ENCODE measurements at regions of chr18 and their contacts with region 1.

Region 1: GRCh38 chr18:32470713-32471633 is at the start of gene GAREM1:
- DNase-seq: peak; percentile 98
- H3K4me3 ChIP-seq: peak within 1 kb of the TSS; percentile 34 to 55 (median 45)
- H3K27ac ChIP-seq: peak within 1 kb of the TSS; percentile 9
- H3K4me1 ChIP-seq: peaks cover 13% of the 10 kb centered on the region
- H3K27me3 ChIP-seq: peaks cover 18 to 22% of the 10 kb centered on the region in 2 experiments
- CTCF ChIP-seq: peak; percentile 61 to 69
- POLR2A ChIP-seq: no peak
- total RNA-seq, gene GAREM1: 1.0 and 1.1 TPM in 2 replicates

Region 2: DNA sequence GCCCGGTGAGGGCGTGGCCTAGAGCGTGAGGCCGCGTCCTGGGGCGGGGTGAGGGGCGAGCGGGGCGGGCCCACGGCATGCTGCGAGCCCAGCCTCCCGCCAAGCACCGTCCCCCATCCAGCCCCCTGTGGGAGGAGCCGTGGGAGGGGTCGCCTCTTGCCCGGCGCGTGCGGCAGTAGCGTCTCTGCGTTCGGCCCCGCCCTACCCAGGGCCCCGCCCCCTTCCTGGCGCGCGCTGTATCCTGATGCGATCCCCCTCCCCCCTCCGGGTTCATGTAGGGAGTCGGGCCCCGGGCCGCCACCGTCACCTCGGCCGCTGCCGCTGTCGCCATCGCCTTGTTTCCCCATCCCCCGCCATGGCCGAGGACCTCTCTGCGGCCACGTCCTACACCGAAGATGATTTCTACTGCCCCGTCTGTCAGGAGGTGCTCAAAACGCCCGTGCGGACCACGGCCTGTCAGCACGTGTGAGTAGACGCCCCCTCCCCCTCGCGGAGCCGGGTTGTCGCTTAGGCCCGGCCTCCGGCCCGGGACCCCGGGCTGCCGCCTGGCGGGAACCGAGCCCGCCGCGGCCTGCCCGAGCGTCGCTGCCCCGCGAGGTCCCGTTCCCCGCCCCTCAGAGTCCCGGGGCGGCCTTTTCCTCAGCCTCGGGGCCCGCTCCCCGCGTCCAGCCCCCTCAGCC is 378.4 kb before region 1 on chr18:
- CTCF ChIA-PET with region 1: interaction called, 3 read pairs
- POLR2A ChIA-PET with region 1: no interaction called
- dilution Hi-C with region 1: no loop called
- intact Hi-C with region 1: loop called (anchors 2 kb)
- DNase-seq: peak; percentile 98
- H3K4me3 ChIP-seq: peak overlapping the region; percentile 30 to 88 (median 81)
- H3K27ac ChIP-seq: peak overlapping the region; percentile 95
- H3K4me1 ChIP-seq: peaks cover 12% of the 10 kb centered on the region
- H3K27me3 ChIP-seq: no peaks in the 10 kb centered on the region
- CTCF ChIP-seq: no peak
- POLR2A ChIP-seq: peak; percentile 73

Region 3: DNA sequence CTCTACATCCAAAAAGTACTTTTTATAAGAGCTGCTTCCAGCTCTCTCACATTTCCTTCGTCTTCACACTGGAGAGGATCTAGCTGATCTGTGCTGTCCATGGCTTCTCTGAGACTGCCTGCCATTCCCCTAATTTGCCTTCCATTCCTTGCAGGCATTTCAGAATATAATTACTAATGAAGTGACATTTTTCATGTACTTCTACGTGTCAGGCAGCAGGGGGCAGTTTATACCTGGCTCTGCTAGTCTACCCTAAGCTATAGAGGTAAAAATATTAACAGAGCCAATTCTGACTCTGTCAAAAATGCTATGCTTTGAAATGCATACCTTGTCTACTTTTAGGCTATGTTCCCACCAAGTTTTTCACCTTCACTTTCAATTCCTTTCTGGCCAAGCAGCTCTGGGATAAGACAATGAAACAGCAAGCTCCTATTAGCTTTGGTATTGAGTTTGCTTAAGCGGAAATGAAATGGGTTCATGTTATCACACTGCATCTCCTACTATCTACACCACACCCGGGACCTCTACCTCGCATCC is 199.2 kb before region 1 on chr18:
- CTCF ChIA-PET with region 1: interaction called, 142 read pairs
- POLR2A ChIA-PET with region 1: no interaction called
- dilution Hi-C with region 1: no loop called
- intact Hi-C with region 1: loop called (anchors 1 kb)
- DNase-seq: peak; percentile 38
- H3K4me3 ChIP-seq: no peak overlapping the region
- H3K27ac ChIP-seq: no peak overlapping the region
- H3K4me1 ChIP-seq: no peaks in the 10 kb centered on the region
- H3K27me3 ChIP-seq: peaks cover 0 to 1% of the 10 kb centered on the region in 2 experiments
- CTCF ChIP-seq: peak; percentile 43 to 62
- POLR2A ChIP-seq: no peak

Region 4: DNA sequence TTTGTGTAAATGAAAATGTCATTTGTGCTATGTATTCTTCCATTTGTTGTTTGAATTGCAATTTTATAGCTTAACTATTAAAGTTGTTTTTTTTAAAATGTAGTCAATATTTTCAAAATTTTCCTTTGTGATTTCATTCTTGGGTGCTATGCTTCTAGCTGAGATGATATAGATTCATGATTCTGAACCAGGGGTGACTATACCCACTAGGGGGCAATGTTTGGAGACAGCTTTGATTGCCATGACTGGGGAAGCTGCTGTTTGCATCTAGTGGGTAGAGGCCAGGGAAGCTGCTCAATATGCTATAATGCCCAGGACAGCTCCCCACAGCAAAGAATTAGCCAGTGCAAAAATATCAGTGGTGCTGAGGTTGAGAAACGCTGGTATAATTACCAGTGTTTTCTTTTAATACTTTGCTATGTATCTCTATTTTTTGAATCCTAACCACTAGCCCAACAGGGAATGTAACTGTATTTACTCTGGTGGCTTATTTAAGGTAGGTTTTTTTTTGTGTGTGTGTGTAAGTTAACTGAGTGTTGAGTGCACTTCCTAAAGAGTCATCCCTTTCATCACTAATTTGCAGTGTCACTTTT is 181.4 kb before region 1 on chr18:
- CTCF ChIA-PET with region 1: interaction called, 295 read pairs
- POLR2A ChIA-PET with region 1: interaction called, 3 read pairs
- dilution Hi-C with region 1: no loop called
- intact Hi-C with region 1: loop called (anchors 1 kb)
- DNase-seq: peak; percentile 77
- H3K4me3 ChIP-seq: no peak overlapping the region
- H3K27ac ChIP-seq: no peak overlapping the region
- H3K4me1 ChIP-seq: no peaks in the 10 kb centered on the region
- H3K27me3 ChIP-seq: peaks cover 2 to 8% of the 10 kb centered on the region in 2 experiments
- CTCF ChIP-seq: peak; percentile 66 to 74
- POLR2A ChIP-seq: no peak

Region 5: GRCh38 chr18:32301976-32302743 is 168.8 kb before region 1 on chr18:
- CTCF ChIA-PET with region 1: interaction called, 10 read pairs
- POLR2A ChIA-PET with region 1: no interaction called
- dilution Hi-C with region 1: no loop called
- intact Hi-C with region 1: no loop called
- DNase-seq: peak; percentile 34
- H3K4me3 ChIP-seq: no peak overlapping the region
- H3K27ac ChIP-seq: no peak overlapping the region
- H3K4me1 ChIP-seq: no peaks in the 10 kb centered on the region
- H3K27me3 ChIP-seq: peaks cover 3 to 5% of the 10 kb centered on the region in 2 experiments
- CTCF ChIP-seq: no peak
- POLR2A ChIP-seq: no peak

Region 6: DNA sequence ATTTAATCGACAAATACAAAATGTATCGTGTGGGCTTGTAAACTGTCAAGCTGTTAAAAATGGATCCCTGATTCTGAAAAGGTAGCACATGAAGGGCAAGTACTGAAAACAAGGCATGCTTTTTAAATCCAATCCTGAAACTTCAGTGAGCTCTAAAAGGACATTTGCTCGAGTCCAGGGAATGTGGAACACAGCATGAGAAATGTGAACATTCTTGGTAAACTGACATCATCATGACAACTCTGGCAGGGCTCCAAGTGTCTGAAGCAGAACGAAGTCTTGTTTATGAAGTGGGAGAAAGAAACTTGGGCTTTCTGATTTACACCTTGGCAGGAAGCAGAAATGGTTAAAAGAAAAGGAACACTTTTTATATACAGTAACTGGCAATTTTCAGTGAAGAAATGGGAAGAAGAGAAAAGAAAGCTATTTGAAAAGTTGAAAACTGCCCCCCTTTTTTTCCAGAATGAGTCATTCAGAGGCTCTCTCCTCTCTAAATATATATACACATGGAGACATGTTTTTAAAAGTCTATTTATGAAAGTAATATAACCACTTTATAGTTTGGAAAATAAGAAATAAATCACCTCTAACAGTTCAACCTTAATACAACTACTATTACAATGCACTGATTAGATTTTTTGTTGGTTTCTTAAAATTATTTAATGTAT is 121.1 kb before region 1 on chr18:
- CTCF ChIA-PET with region 1: interaction called, 13 read pairs
- POLR2A ChIA-PET with region 1: no interaction called
- dilution Hi-C with region 1: no loop called
- intact Hi-C with region 1: no loop called
- DNase-seq: peak; percentile 95
- H3K4me3 ChIP-seq: peak overlapping the region in 1 of 3 experiments; percentile 10
- H3K27ac ChIP-seq: peak overlapping the region; percentile 83
- H3K4me1 ChIP-seq: peaks cover 11% of the 10 kb centered on the region
- H3K27me3 ChIP-seq: no peaks in the 10 kb centered on the region
- CTCF ChIP-seq: no peak
- POLR2A ChIP-seq: no peak

Region 7: GRCh38 chr18:32439802-32440201 is 31.2 kb before region 1 on chr18:
- CTCF ChIA-PET with region 1: interaction called, 16 read pairs
- POLR2A ChIA-PET with region 1: no interaction called
- dilution Hi-C with region 1: no loop called
- intact Hi-C with region 1: no loop called
- DNase-seq: peak; percentile 9
- H3K4me3 ChIP-seq: no peak overlapping the region
- H3K27ac ChIP-seq: no peak overlapping the region
- H3K4me1 ChIP-seq: no peaks in the 10 kb centered on the region
- H3K27me3 ChIP-seq: no peaks in the 10 kb centered on the region
- CTCF ChIP-seq: peak; percentile 23 to 34
- POLR2A ChIP-seq: no peak

Region 8: DNA sequence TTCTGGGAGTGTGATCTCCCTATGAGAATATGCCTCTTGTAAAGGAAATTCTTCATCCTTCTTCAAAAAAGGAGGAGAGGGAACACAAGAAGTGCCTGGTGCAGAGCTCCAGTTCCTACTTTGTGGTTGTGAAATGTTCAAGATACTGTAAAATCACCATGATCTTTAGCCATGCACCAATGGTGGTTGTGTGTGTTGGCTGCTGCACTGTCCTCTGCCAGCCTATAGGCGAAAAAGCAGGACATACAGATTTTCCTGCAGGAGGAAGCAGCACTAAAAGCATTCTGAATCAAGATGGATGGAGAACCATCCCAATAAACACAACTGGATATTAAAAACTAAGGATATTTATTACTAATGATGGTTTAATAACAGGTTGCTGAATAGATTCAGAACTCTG is 308.0 kb after region 1 on chr18:
- CTCF ChIA-PET with region 1: no interaction called
- POLR2A ChIA-PET with region 1: no interaction called
- dilution Hi-C with region 1: no loop called
- intact Hi-C with region 1: no loop called
- DNase-seq: no peak
- H3K4me3 ChIP-seq: no peak overlapping the region
- H3K27ac ChIP-seq: no peak overlapping the region
- H3K4me1 ChIP-seq: peaks cover 8% of the 10 kb centered on the region
- H3K27me3 ChIP-seq: peaks cover 0 to 2% of the 10 kb centered on the region in 2 experiments
- CTCF ChIP-seq: no peak
- POLR2A ChIP-seq: no peak